Lower leg skin (tissue), 4 donors: ENCODE measurements at regions of chr3 and their contacts with region 1.

Region 1: DNA sequence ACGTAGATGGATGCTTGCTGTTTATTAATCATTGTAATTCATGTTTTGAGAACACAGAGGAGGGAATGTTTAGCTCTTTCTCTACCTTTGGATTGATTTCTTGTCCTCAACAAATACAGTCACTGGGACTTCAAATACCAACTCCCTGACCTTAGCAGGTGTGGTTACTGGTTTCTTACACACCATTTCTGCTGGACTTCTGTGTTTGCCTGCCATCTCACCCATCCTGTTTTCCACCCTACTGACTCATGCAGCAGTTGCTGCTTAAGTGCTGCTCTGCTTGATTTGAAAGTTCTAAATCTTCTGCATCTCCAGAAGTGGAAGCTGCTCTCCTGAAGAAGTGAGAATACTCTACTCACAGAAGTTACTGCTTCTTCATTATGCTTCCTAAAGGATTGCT is 170.3 kb downstream of the ZPLD1 start:
- DNase-seq: no peak
- H3K4me3 ChIP-seq: no peak overlapping the region
- CTCF ChIP-seq: no peak
- POLR2A ChIP-seq: no peak

Region 2: DNA sequence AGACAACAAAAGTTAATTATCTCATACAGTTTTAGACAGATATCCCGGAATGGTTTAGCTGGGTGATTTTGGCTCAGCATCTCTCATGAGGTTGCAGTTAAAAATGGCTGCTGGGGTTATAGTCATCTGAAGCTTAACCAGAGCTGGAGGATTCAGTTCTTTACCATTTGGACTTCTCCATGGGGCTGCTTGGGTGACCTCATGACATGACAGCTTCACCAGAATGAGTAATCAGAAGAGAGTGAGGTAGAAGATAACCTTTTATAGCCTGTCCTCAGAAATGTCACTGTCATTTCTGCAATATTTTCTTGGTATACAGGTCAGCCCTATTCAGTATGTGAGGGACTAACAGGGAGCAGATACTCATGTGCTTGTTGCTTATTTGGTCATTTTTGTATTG is 1864.9 kb before region 1 on chr3:
- intact Hi-C with region 1: loop called (anchors 10 kb)
- DNase-seq: no peak
- H3K4me3 ChIP-seq: no peak overlapping the region
- CTCF ChIP-seq: no peak
- POLR2A ChIP-seq: no peak

Region 3: GRCh38 chr3:101836652-101837598 is 768.2 kb before region 1 on chr3:
- intact Hi-C with region 1: no loop called
- DNase-seq: no peak
- H3K4me3 ChIP-seq: no peak overlapping the region
- CTCF ChIP-seq: no peak
- POLR2A ChIP-seq: no peak

Region 4: GRCh38 chr3:103440539-103441203 is 835.5 kb after region 1 on chr3:
- intact Hi-C with region 1: no loop called
- DNase-seq: no peak
- H3K4me3 ChIP-seq: no peak overlapping the region
- CTCF ChIP-seq: no peak
- POLR2A ChIP-seq: no peak